CD4-positive, alpha-beta T cell (primary cell): ENCODE measurements at regions of chr2 and their contacts with region 1.

Region 1: DNA sequence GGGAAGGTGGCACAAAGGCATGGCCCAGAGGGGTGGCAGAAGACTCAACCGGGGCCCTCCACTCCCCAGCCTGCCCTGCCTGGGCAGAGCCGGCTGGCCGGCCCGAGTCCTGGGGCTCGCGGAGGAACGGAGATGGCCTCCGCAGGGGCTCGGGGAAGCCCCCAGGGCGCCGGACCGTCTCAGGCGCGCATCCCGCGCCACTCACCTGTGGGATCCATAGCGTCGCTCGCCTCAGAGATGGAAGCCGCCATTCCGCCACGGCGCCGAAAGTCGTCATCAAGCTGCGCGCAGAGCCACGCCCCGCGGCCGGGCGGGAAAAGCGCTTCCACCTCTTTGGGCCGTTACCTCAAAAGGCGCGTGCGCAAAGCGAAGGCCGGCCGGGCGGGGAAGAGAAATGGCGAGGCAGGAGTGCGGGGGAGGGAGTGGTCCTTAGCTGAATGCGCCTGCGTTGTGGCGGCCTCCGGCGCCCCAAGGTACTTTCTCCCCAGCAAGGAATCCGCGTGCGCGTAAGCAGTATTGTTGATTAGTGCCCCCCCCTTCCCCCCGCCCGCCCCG is at the start of gene SMPD4:
- DNase-seq: peak; percentile 97 to 99 (median 98)
- ATAC-seq: peak; percentile 76
- H3K4me3 ChIP-seq: peak within 1 kb of the TSS; percentile 66
- H3K4me3 Mint-ChIP-seq: peak within 1 kb of the TSS; percentile 98
- H3K27ac ChIP-seq: peak within 1 kb of the TSS; percentile 75 to 89
- H3K27ac Mint-ChIP-seq: peak within 1 kb of the TSS; percentile 99
- H3K4me1 ChIP-seq: peaks cover 32% of the 10 kb centered on the region
- H3K4me1 Mint-ChIP-seq: peaks cover 26% of the 10 kb centered on the region
- H3K27me3 ChIP-seq: no peaks in the 10 kb centered on the region
- H3K27me3 Mint-ChIP-seq: no peaks in the 10 kb centered on the region
- CTCF ChIP-seq: no peak
- total RNA-seq, gene SMPD4: 81.2 to 89.9 TPM

Region 2: GRCh38 chr2:129877289-129877779 is 304.1 kb before region 1 on chr2:
- CTCF ChIA-PET with region 1: interaction called, 3 read pairs
- POLR2A ChIA-PET with region 1: interaction called, 3 read pairs
- intact Hi-C with region 1: loop called in 1 of 2 experiments (anchors 5 kb)
- DNase-seq: peak; percentile 72 to 93 (median 82)
- ATAC-seq: peak; percentile 90
- H3K4me3 ChIP-seq: peak overlapping the region; percentile 81
- H3K4me3 Mint-ChIP-seq: peak overlapping the region; percentile 99
- H3K27ac ChIP-seq: peak overlapping the region in 1 of 2 donors; percentile 50
- H3K27ac Mint-ChIP-seq: peak overlapping the region; percentile 92
- H3K4me1 ChIP-seq: peaks cover 15% of the 10 kb centered on the region
- H3K4me1 Mint-ChIP-seq: peaks cover 11% of the 10 kb centered on the region
- H3K27me3 ChIP-seq: no peaks in the 10 kb centered on the region
- H3K27me3 Mint-ChIP-seq: no peaks in the 10 kb centered on the region
- CTCF ChIP-seq: no peak

Region 3: GRCh38 chr2:130372055-130372832 is 190.8 kb after region 1 on chr2:
- CTCF ChIA-PET with region 1: no interaction called
- POLR2A ChIA-PET with region 1: interaction called, 6 read pairs
- intact Hi-C with region 1: loop called in 1 of 2 experiments (anchors 10 kb)
- DNase-seq: peak; percentile 57 to 85 (median 72)
- ATAC-seq: peak; percentile 83
- H3K4me3 ChIP-seq: peak overlapping the region; percentile 76
- H3K4me3 Mint-ChIP-seq: peak overlapping the region; percentile 92
- H3K27ac ChIP-seq: peak overlapping the region; percentile 70 to 80
- H3K27ac Mint-ChIP-seq: peak overlapping the region; percentile 97
- H3K4me1 ChIP-seq: peaks cover 71% of the 10 kb centered on the region
- H3K4me1 Mint-ChIP-seq: peaks cover 73% of the 10 kb centered on the region
- H3K27me3 ChIP-seq: no peaks in the 10 kb centered on the region
- H3K27me3 Mint-ChIP-seq: no peaks in the 10 kb centered on the region
- CTCF ChIP-seq: peak; percentile 67

Region 4: GRCh38 chr2:130797493-130798435 is 616.4 kb after region 1 on chr2:
- CTCF ChIA-PET with region 1: no interaction called
- POLR2A ChIA-PET with region 1: no interaction called
- intact Hi-C with region 1: loop called in 1 of 2 experiments (anchors 5 kb)
- DNase-seq: peak; percentile 84 to 96 (median 90)
- ATAC-seq: peak; percentile 88
- H3K4me3 ChIP-seq: peak overlapping the region; percentile 94
- H3K4me3 Mint-ChIP-seq: peak overlapping the region; percentile 85
- H3K27ac ChIP-seq: peak overlapping the region; percentile 74 to 87
- H3K27ac Mint-ChIP-seq: peak overlapping the region; percentile 71
- H3K4me1 ChIP-seq: peaks cover 17% of the 10 kb centered on the region
- H3K4me1 Mint-ChIP-seq: peaks cover 7% of the 10 kb centered on the region
- H3K27me3 ChIP-seq: peaks cover 0 to 2% of the 10 kb centered on the region in 2 experiments
- H3K27me3 Mint-ChIP-seq: peaks cover 4% of the 10 kb centered on the region
- CTCF ChIP-seq: peak; percentile 68

Region 5: DNA sequence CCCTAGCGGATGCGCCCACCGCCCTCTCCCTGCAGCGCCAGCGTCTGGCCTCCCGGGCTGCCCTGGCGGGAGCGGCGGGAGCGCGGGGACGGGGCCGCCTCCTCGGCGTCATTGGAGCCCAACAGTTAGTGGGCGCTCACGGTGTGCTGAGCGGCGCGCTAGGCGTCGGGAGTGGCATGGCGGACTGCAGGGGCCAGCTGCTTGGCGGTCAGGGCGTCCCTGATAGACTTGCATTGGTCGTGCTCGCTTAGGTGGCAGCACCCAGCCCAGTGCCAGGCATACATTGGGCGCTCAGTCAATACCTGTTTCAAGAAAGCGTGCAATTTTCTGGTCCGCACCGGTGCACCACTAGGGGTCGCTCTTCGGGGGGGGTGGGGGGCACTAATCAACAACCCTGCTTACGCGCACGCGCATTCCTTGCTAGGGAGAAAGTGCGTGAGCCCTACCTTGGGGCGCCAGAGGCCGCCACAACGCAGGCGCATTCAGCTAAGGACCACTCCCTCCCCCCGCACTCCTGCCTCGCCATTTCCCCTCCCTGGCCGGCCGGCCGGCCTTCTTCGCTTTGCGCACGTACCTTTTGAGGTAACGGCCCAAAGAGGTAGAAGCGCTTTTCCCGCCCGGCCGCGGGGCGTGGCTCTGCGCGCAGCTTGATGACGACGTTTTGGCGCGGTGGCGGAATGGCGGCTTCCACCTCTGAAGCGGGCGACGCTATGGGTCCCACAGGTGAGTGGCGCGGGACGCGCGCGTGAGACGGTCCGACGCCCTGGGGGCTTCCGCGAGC is 1311.2 kb after region 1 on chr2:
- CTCF ChIA-PET with region 1: interaction called, 3 read pairs
- POLR2A ChIA-PET with region 1: interaction called, 8 read pairs
- intact Hi-C with region 1: loop called in 1 of 2 experiments (anchors 5 kb)
- DNase-seq: peak; percentile 83 to 98 (median 93)
- ATAC-seq: peak; percentile 71
- H3K4me3 ChIP-seq: peak overlapping the region; percentile 83
- H3K4me3 Mint-ChIP-seq: peak overlapping the region; percentile 98
- H3K27ac ChIP-seq: peak overlapping the region; percentile 94 to 96
- H3K27ac Mint-ChIP-seq: peak overlapping the region; percentile 98
- H3K4me1 ChIP-seq: peaks cover 45% of the 10 kb centered on the region
- H3K4me1 Mint-ChIP-seq: peaks cover 30% of the 10 kb centered on the region
- H3K27me3 ChIP-seq: no peaks in the 10 kb centered on the region
- H3K27me3 Mint-ChIP-seq: no peaks in the 10 kb centered on the region
- CTCF ChIP-seq: peak; percentile 87